ENCODE measurements at regions of chr1 and their contacts with region 1.

Region 1: DNA sequence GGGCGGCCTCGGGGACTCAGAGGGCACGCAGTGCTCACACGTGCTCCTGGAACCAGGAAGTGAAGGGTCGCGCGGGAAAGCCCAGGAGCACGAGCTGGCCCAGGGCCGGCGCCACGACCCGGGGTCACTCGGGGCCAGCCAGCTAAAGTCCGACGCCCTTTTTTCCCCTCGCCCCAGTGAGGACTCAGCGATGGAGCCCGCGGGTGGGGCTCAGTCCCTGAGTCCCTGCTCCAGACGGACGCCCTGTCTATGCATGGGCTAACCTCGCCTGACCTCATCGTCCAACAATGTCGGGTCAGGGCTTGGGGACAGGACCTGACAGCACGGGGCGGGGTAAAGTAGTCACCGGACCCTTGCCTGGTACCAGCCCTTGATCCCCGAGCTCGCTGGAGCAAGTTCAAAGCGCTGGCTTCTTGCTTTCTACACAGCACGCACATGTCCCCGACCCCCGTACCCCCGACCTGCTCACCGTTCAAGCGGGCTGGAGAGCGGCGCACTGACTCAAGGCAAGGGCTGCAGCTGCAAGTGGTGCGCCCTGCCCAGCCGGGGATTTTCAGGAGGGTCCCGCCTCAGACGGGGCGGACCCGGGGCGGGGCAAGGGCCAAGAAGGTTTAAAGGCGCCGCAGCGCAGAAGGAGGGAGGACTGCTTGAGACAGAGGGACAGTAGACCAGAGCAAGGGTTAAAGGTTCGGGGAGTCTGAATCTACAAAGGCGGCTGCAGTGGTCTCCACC is at the start of gene TAGLN2:
- DNase-seq: peak; percentile 91 to 94
- H3K4me3 ChIP-seq: peak within 1 kb of the TSS; percentile 82
- H3K4me1 ChIP-seq: peaks cover 14% of the 10 kb centered on the region
- H3K27me3 ChIP-seq: no peaks in the 10 kb centered on the region

Region 2: DNA sequence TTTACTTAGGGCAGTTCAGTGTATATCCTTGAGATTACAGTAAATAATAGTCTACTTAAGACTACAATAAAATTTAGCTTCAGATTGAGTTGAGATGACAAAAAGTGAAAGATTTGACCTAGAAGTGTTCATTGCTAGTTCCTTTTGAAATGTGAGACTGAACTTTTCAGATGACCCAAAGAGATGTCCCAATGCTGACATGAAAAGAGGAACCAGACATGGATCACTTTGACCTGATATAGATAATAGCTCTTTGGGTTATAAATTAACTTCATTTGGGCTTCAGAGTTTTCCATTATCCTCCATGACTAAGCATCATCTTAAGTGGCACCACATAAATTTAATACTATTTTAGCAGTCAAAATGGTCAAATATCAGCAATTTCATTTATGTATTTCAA is 363.6 kb before region 1 on chr1:
- in situ Hi-C with region 1: no loop called
- DNase-seq: no peak
- H3K4me3 ChIP-seq: no peak overlapping the region
- H3K4me1 ChIP-seq: no peaks in the 10 kb centered on the region
- H3K27me3 ChIP-seq: no peaks in the 10 kb centered on the region

Region 3: GRCh38 chr1:160244209-160244608 is 319.1 kb after region 1 on chr1:
- in situ Hi-C with region 1: loop called (anchors 25 kb)
- DNase-seq: no peak
- H3K4me3 ChIP-seq: no peak overlapping the region
- H3K4me1 ChIP-seq: peaks cover 11% of the 10 kb centered on the region
- H3K27me3 ChIP-seq: no peaks in the 10 kb centered on the region

Region 4: GRCh38 chr1:160354388-160354985 is 429.3 kb after region 1 on chr1:
- in situ Hi-C with region 1: loop called (anchors 25 kb)
- DNase-seq: peak in 1 of 2 experiments; percentile 53
- H3K4me3 ChIP-seq: no peak overlapping the region
- H3K4me1 ChIP-seq: no peaks in the 10 kb centered on the region
- H3K27me3 ChIP-seq: no peaks in the 10 kb centered on the region